Dorsolateral prefrontal cortex (tissue), 120 donors: ENCODE measurements at regions of chr1 and their contacts with region 1.

Region 1: GRCh38 chr1:182091061-182091460 is 29.5 kb upstream of the ZNF648 start:
- DNase-seq: no peak
- H3K4me3 ChIP-seq: no peak overlapping the region
- H3K27ac ChIP-seq: peak overlapping the region in 1 of 59 donors; percentile 10
- H3K27me3 ChIP-seq: no peaks in the 10 kb centered on the region
- CTCF ChIP-seq: no peak

Region 2: GRCh38 chr1:181872562-181873144 is 218.4 kb before region 1 on chr1:
- intact Hi-C with region 1: no loop called
- DNase-seq: no peak
- H3K4me3 ChIP-seq: no peak overlapping the region
- H3K27ac ChIP-seq: no peak overlapping the region
- H3K27me3 ChIP-seq: peaks cover 0 to 3% (median 0%) of the 10 kb centered on the region in 45 donors
- CTCF ChIP-seq: no peak

Region 3: DNA sequence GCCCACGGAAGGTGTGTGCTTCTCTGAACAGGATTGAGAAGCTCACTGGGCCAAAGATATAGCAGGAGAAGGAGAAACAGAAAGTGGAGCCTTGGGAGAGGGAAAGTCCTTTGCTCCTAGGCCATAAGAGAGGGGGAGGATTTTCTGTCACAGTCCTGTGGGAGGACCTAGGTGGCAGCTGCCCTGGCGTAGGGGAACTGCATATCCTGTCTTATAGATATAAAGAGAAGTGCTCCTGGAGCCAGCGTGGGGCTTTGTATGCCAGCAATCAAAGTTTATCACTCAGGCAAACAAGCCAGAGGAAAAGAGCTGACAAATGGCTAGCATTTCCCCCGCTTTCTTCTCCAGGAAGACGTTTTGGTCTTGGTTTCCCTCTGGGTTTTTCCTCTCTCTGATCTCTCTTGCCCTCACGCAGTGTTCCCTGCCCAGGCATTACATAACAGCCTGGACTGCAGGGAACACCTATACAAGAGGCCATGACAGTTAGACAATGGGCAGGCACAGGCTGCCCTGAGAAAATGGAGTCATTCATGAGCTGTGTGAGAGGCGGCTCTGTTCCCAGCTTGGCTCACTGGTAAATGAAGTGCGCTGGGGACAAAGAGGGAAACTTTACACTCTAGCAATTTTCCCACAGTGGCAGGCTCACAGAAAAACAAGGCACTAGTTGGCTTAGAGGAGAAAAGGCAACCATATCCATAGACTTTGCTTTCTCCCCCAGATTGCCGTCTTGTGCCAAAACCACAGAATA is 23.0 kb after region 1 on chr1:
- intact Hi-C with region 1: loop called in 1 of 2 experiments (anchors 2 kb)
- DNase-seq: peak; percentile 14 to 92 (median 86)
- H3K4me3 ChIP-seq: peak overlapping the region in 39 of 59 donors; percentile 1 to 57 (median 26)
- H3K27ac ChIP-seq: peak overlapping the region; percentile 30 to 92 (median 82)
- H3K27me3 ChIP-seq: peaks cover 0 to 11% (median 0%) of the 10 kb centered on the region in 45 donors
- CTCF ChIP-seq: peak in 25 of 56 donors; percentile 5 to 45 (median 25)